Dendritic cell treated with granulocyte-macrophage colony-stimulating factor and Interleukin-4, amounts not matched to agents 40 ng/mL and 50 ng/mL, for 4 days (primary cell): ENCODE measurements at regions of chr11 and their contacts with region 1.

Region 1: DNA sequence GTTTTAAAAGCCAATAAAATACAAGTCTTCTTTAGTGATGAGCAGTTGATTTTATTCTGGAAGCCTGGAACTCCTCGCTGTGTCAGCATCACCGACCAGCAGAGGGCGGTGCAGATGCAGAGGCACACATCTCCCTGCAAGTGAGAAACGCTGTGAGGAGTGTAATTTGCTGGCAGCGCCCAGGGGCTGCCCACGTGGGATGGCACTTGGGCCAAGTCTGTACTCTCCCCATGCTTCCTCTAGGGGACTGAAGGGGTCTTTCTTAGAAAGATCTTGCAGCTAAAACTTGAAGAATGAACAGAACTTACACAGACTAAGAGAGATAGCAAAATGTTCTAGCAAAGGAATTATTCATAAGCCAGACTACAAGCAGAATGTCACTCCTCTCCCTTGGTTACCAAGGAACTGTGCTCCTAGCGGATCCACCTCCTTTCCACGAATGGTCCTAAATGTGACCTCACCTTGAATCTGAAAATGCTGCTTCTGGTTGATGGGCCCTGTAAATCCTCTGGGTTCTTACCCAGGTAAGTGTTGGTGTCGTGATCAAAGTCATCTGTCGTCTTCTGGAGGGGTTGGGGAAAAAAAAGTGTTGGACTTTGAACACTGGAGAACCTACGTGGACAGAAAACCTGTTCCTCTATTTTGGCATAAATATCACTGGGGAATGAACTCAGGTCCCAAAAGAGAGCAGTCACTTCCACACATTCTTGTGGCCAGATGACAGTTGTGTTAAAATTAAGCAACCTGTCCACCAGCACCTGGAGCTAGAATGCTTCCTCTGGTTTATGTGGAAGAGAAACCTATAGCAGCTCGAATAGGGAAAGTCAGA is 31.8 kb downstream of the CNTF start:
- H3K4me3 Mint-ChIP-seq: no peak overlapping the region
- H3K27ac Mint-ChIP-seq: no peak overlapping the region
- H3K4me1 Mint-ChIP-seq: peaks cover 7% of the 10 kb centered on the region
- H3K27me3 Mint-ChIP-seq: no peaks in the 10 kb centered on the region

Region 2: DNA sequence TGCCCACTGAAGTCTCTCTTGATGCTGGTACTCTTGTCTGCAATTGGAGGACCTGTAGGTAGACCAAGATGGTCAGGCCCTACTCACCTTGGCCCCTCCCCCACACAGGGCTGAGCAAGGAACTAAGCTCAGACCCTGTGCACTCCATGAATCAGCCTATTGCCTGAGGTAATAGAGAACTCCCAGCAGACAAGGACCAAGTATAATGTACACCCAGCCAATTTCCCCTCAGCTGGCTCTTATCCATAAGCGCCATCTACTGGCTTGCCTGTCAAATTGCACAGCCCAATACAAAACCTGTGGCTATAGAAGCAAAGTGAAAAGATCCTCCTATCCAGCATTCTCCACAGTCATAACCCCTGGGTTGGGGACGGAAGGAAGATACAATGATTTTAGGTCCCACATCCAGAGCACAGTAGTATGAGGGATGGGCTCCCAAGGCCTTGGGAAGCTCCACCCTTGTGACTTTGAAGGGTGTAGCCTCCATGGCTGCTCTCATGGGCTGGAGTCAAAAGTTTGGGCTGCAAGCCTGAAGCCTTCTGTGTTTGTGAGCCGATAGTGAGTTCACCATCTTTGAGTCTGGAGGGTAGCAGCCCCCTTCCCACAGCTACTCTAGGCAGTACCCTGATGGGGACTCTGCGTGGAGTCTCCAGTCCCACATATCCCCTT is 134.2 kb after region 1 on chr11:
- intact Hi-C with region 1: loop called (anchors 1 kb)
- H3K4me3 Mint-ChIP-seq: no peak overlapping the region
- H3K27ac Mint-ChIP-seq: no peak overlapping the region
- H3K4me1 Mint-ChIP-seq: no peaks in the 10 kb centered on the region
- H3K27me3 Mint-ChIP-seq: peaks cover 2% of the 10 kb centered on the region

Region 3: GRCh38 chr11:58900479-58901420 is 246.5 kb after region 1 on chr11:
- intact Hi-C with region 1: loop called (anchors 2 kb)
- H3K4me3 Mint-ChIP-seq: no peak overlapping the region
- H3K27ac Mint-ChIP-seq: no peak overlapping the region
- H3K4me1 Mint-ChIP-seq: peaks cover 19% of the 10 kb centered on the region
- H3K27me3 Mint-ChIP-seq: peaks cover 49% of the 10 kb centered on the region

Region 4: GRCh38 chr11:58923300-58923788 is 269.1 kb after region 1 on chr11:
- intact Hi-C with region 1: loop called (anchors 5 kb)
- H3K4me3 Mint-ChIP-seq: no peak overlapping the region
- H3K27ac Mint-ChIP-seq: peak overlapping the region; percentile 25
- H3K4me1 Mint-ChIP-seq: peaks cover 18% of the 10 kb centered on the region
- H3K27me3 Mint-ChIP-seq: peaks cover 10% of the 10 kb centered on the region